Activated T-helper 1 cell treated with anti-CD3 and anti-CD28 coated beads, Interleukin-12 subunit alpha, Interleukin-12 subunit beta, Interleukin-2, Interleukin-4 antibody, amounts not matched to agents 30 ng/mL and 10 ng/mL and 1 ng/mL, durations not matched to agents 14 hours and 24 hours and 36 hours (primary cell): ENCODE measurements at regions of chr11 and their contacts with region 1.

Region 1: GRCh38 chr11:36289226-36289852 is at the start of gene COMMD9:
- DNase-seq: peak; percentile 93
- H3K4me3 Mint-ChIP-seq: peak within 1 kb of the TSS; percentile 94
- H3K27ac Mint-ChIP-seq: peak within 1 kb of the TSS; percentile 78
- H3K4me1 Mint-ChIP-seq: peaks cover 27% of the 10 kb centered on the region
- H3K27me3 Mint-ChIP-seq: no peaks in the 10 kb centered on the region
- total RNA-seq, gene COMMD9: 39.7 and 41.3 TPM in 2 replicates

Region 2: DNA sequence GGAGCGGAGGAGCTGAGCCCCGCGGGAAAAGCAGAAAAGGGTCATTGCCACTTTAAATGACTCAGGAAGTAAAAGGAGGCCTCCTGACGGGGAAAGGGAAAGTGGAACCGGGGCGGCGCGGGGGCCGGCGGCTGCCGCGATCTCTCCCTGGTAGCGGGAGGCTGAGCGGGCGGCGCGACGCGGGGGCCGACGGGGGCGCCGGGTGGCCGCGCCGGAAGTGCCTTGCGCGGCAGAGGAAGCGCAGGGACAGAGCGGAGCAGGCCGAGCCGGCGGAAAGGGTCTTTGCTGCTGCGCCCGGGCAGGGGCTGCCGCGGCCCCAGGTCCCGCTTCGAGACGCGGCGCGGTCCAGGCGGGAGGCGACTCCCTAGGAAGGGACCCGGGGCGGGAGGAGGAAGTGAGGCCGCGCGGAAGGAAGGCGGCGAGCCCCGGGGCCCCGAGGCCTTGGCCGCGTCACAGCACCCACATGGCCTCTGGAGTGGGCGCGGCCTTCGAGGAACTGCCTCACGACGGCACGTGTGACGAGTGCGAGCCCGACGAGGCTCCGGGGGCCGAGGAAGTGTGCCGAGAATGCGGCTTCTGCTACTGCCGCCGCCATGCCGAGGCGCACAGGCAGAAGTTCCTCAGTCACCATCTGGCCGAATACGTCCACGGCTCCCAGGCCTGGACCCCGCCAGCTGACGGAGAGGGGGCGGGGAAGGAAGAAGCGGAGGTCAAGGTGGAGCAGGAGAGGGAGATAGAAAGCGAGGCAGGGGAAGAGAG is 626.5 kb before region 1 on chr11 and contains the start of gene TRIM44:
- intact Hi-C with region 1: loop called (anchors 1 kb)
- DNase-seq: peak; percentile 79
- H3K4me3 Mint-ChIP-seq: peak within 1 kb of the TSS; percentile 89
- H3K27ac Mint-ChIP-seq: peak within 1 kb of the TSS; percentile 93
- H3K4me1 Mint-ChIP-seq: peaks cover 33% of the 10 kb centered on the region
- H3K27me3 Mint-ChIP-seq: peaks cover 18% of the 10 kb centered on the region
- total RNA-seq, gene TRIM44: 24.3 and 27.6 TPM in 2 replicates

Region 3: GRCh38 chr11:36205536-36205935 is 83.8 kb before region 1 on chr11:
- intact Hi-C with region 1: no loop called
- DNase-seq: no peak
- H3K4me3 Mint-ChIP-seq: no peak overlapping the region
- H3K27ac Mint-ChIP-seq: no peak overlapping the region
- H3K4me1 Mint-ChIP-seq: no peaks in the 10 kb centered on the region
- H3K27me3 Mint-ChIP-seq: peaks cover 2% of the 10 kb centered on the region

Region 4: GRCh38 chr11:36265793-36266628 is 23.3 kb before region 1 on chr11:
- intact Hi-C with region 1: loop called (anchors 1 kb)
- DNase-seq: peak; percentile 26
- H3K4me3 Mint-ChIP-seq: no peak overlapping the region
- H3K27ac Mint-ChIP-seq: no peak overlapping the region
- H3K4me1 Mint-ChIP-seq: no peaks in the 10 kb centered on the region
- H3K27me3 Mint-ChIP-seq: peaks cover 20% of the 10 kb centered on the region

Region 5: DNA sequence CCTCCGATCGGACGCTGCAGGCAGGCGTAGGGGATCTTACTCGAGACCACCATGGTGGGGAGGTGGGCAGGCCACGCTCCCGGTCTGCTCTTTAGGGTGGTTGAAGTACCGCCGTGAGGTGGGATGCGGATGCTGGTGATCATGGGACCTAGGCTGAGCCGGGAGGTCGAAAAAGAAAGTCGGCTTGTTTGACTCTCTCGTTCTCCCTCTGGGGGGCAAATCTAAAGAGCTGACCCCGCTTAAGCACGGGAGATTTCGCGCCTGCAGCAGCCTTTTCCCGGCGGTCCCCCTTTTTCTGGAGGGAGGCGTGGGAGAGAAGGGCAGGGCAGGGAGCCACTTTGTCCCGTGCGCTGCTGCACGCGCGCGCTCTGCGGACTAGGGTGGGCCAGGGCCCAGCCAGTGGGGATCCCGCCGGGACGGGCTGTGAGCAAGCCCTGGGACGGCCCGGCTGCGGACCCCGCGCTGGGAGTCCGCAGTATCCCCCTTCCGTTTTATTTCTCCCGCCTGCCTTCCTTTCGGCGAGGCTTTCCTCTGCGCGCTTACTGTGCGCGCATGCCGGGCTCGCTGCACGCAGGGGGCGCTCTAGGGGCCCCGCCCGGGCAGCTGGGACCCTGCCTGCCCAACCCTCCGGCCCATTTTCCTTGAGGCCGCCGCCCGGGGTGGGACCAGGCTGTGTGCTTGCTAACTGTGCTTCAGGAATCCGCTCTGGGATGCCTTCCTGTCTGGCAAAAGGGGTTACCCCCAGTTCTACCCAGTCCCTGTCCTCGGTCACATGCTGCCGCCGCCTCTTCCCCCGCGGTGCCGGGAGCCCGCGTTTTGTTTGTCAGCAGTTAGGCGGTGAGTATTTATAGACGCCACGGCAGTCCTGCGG is 87.8 kb after region 1 on chr11:
- intact Hi-C with region 1: loop called (anchors 1 kb)
- DNase-seq: peak; percentile 63
- H3K4me3 Mint-ChIP-seq: peak overlapping the region; percentile 97
- H3K27ac Mint-ChIP-seq: peak overlapping the region; percentile 88
- H3K4me1 Mint-ChIP-seq: peaks cover 61% of the 10 kb centered on the region
- H3K27me3 Mint-ChIP-seq: peaks cover 33% of the 10 kb centered on the region

Region 6: DNA sequence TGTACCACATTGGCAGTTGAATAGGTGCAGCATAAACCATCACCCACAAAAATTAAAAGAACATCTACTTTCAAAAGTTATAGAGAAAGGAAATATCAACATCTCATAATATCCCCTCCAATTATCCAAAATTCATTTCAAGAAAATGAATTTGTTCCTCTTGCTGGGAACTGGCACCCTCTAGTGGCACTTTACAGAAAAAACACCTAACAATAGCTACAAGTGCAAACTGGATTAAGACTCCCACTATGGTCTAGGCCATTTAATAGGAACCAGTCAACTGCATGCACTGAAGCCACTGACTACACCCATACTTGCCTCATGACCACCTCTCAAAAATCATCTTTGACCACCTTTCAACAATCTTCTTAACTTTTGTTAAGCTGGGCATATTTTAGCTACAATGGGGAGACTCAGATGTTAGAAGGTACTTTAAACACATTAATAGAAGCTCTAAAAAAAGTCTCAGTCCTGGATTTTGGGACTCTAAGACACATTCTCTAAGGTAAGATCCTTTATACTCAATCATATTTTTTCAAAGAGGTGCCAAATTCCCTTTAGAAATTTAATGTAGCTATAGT is 203.5 kb after region 1 on chr11:
- intact Hi-C with region 1: loop called (anchors 1 kb)
- DNase-seq: no peak
- H3K4me3 Mint-ChIP-seq: no peak overlapping the region
- H3K27ac Mint-ChIP-seq: no peak overlapping the region
- H3K4me1 Mint-ChIP-seq: peaks cover 18% of the 10 kb centered on the region
- H3K27me3 Mint-ChIP-seq: no peaks in the 10 kb centered on the region

Region 7: DNA sequence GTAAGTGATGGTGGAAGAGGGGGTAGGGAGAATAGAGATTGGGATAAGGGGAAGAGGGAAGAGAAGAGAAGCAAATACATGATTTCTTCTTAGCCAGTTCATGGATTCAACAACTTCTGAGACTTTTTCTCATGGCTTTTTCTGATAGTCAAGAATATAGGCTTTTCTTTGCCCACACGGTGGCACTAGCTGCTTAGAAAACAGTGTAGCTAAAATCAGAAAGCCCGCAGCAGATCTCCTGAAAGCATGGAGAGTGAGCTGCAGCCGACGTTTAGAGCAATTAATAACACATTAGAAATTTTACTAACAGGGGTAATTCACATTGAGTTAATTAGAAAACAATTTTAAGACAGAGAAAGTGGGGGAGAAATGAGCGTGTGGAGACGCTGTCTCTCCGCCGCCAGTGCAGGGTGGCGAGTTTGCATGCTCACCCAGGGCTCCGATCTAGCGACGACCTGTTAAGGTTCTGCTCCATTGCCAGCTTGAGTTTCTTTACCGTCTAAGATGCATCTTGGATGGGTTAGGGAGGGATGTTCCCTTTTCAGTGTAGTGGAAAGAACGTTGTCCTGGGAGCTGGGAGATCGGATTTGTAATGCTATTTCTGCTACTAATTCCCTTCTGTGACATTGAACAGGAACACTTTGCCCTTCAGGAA is 275.2 kb after region 1 on chr11:
- intact Hi-C with region 1: loop called (anchors 5 kb)
- DNase-seq: peak; percentile 21
- H3K4me3 Mint-ChIP-seq: peak overlapping the region; percentile 63
- H3K27ac Mint-ChIP-seq: no peak overlapping the region
- H3K4me1 Mint-ChIP-seq: peaks cover 19% of the 10 kb centered on the region
- H3K27me3 Mint-ChIP-seq: peaks cover 44% of the 10 kb centered on the region

Region 8: DNA sequence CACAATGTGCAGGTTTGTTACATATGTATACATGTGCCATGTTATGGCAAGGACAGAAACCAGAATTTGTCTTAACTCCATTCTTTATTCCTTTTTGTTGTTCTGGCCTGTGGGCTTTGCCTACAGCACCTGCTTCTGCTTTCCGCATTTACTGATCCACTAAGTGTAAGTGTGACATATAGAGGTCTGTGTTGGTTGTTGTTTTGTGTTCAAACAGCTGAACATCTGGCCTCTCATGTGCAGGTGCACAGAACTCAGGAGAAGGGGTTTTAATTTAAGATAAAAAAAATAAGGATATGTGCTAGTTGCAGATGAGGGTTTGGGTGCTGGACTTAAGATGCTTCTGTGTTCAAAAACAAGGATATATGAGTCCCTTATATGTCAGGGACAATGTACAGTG is 394.5 kb after region 1 on chr11:
- intact Hi-C with region 1: no loop called
- DNase-seq: no peak
- H3K4me3 Mint-ChIP-seq: no peak overlapping the region
- H3K27ac Mint-ChIP-seq: no peak overlapping the region
- H3K4me1 Mint-ChIP-seq: no peaks in the 10 kb centered on the region
- H3K27me3 Mint-ChIP-seq: peaks cover 33% of the 10 kb centered on the region

Region 9: GRCh38 chr11:36746886-36747710 is 457.8 kb after region 1 on chr11:
- intact Hi-C with region 1: loop called (anchors 1 kb)
- DNase-seq: peak; percentile 79
- H3K4me3 Mint-ChIP-seq: no peak overlapping the region
- H3K27ac Mint-ChIP-seq: no peak overlapping the region
- H3K4me1 Mint-ChIP-seq: no peaks in the 10 kb centered on the region
- H3K27me3 Mint-ChIP-seq: peaks cover 9% of the 10 kb centered on the region